Activated CD4-positive, alpha-beta memory T cell treated with anti-CD3 and anti-CD28 coated beads, Interleukin-2, amount 10 ng/mL, durations not matched to agents 7 days and 5 days (primary cell): ENCODE measurements at regions of chr9 and their contacts with region 1.

Region 1: GRCh38 chr9:124126571-124127289 is 115.2 kb downstream of the LHX2 start:
- DNase-seq: peak; percentile 84
- H3K4me3 Mint-ChIP-seq: no peak overlapping the region
- H3K27ac Mint-ChIP-seq: no peak overlapping the region
- H3K4me1 Mint-ChIP-seq: peaks cover 5% of the 10 kb centered on the region
- H3K27me3 Mint-ChIP-seq: peaks cover 2% of the 10 kb centered on the region

Region 2: DNA sequence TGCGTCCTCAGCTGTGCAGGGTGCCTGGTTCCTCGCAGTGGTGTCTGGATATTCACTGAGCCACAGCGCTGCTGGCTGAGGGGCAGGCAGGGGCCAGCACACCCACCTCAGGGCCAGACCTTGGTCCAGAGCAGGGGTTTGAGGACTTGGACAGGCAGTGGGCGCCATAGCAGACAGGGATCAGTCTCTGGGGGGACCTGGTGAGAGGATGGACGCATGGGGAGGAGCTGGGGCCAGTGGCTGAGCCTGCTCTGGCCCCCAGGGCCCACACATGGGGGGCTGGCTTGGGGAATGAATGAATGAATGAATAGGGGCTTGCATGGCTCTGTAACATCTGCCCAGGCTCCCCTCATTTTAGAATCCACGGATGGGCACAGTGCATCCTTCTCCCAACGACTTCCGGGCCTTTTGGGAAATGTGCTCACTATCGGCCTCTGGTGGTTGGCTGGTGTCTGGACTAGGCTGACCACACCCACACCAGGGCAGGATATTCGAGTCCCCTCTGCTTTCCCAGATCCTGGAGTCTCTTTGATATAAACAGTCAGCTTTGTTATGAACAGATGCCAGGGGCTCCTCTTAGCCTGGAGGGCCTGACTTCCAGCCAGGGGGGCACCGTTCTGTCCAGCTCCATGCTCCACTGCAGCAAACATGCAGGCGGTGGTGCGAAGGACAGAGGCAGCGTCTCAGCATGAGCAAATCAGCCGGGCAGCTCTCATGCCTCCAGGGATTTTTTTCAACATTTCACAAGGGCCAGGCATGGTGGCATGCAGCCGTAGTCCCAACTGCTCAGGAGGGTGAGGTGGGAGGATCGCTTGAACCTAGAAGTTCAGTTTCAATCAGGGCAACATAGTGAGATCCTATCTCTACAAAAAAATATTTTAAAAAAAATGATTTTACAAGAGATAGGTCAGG is 193.6 kb after region 1 on chr9:
- CTCF ChIA-PET with region 1: interaction called, 24 read pairs
- POLR2A ChIA-PET with region 1: no interaction called
- DNase-seq: peak; percentile 60
- H3K4me3 Mint-ChIP-seq: no peak overlapping the region
- H3K27ac Mint-ChIP-seq: peak overlapping the region; percentile 23
- H3K4me1 Mint-ChIP-seq: peaks cover 11% of the 10 kb centered on the region
- H3K27me3 Mint-ChIP-seq: no peaks in the 10 kb centered on the region

Region 3: GRCh38 chr9:124359855-124360676 is 233.3 kb after region 1 on chr9:
- CTCF ChIA-PET with region 1: interaction called, 14 read pairs
- POLR2A ChIA-PET with region 1: interaction called, 3 read pairs
- DNase-seq: no peak
- H3K4me3 Mint-ChIP-seq: no peak overlapping the region
- H3K27ac Mint-ChIP-seq: no peak overlapping the region
- H3K4me1 Mint-ChIP-seq: peaks cover 31% of the 10 kb centered on the region
- H3K27me3 Mint-ChIP-seq: no peaks in the 10 kb centered on the region

Region 4: DNA sequence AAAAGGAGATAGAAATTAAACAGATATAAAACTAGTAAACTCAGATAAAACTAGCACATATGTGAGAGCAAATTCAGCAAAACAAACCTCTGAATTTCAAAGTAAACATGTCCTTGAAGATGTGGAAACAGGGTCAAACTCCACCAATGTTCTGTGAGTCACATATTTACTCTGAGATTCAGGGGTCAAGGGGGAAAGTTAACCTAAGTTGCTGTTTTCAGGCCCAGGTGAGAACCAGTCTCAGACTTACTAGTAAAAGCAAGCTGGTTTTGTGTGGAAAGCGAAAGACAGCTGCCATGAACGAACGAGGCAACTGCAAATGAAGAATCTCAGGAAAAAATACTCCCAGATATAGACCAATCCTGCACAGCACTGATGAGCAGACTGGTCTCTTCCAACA is 259.5 kb after region 1 on chr9:
- CTCF ChIA-PET with region 1: interaction called, 15 read pairs
- POLR2A ChIA-PET with region 1: interaction called, 3 read pairs
- DNase-seq: no peak
- H3K4me3 Mint-ChIP-seq: no peak overlapping the region
- H3K27ac Mint-ChIP-seq: no peak overlapping the region
- H3K4me1 Mint-ChIP-seq: peaks cover 15% of the 10 kb centered on the region
- H3K27me3 Mint-ChIP-seq: no peaks in the 10 kb centered on the region

Region 5: DNA sequence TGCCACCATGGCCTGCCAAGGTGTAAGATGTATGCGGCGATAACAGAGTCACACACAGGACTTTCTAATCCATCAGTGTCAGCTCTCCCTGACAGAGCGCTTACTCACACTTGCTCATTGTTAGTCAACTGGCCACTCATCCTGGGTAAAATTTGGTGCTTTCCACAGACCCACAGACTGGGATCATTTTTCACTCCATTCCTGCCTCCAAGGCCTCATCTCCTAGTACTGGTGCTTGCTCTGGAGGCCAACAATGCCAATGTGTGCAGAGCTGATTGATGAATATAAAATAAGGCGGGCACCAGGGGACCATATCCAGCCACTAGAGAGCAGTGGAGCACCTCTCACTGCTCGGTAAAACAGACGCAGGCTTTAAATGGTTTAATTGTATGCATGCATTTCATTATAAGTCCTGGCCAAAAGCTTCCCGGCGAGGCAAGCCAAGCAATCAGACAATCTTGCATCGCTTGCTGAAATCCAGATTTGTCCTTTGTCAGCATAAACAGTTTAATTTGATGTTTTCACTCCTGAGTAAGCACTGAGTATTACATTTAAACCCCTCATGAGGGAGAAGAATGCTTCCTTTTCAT is 266.2 kb after region 1 on chr9:
- CTCF ChIA-PET with region 1: interaction called, 26 read pairs
- POLR2A ChIA-PET with region 1: no interaction called
- DNase-seq: no peak
- H3K4me3 Mint-ChIP-seq: no peak overlapping the region
- H3K27ac Mint-ChIP-seq: no peak overlapping the region
- H3K4me1 Mint-ChIP-seq: peaks cover 28% of the 10 kb centered on the region
- H3K27me3 Mint-ChIP-seq: no peaks in the 10 kb centered on the region